Caco-2 (cell line): ENCODE measurements at regions of chr3 and their contacts with region 1.

Region 1: DNA sequence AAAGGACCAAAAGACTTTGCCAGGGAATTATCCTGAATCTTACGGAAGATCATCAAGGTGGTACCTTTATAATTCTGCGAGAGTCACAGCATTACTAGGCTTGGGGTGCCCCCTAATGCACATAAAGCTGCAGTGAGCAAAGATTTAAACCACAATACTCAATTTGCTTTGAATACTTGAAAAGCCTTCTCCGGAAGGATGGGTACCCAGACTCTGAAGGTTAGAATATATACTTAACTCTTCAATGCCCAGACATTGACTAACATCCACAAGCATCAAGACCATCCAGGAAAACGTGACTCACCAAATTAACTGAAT is 117.8 kb upstream of the KCNH8 start:
- DNase-seq: peak in 1 of 2 experiments; percentile 29
- H3K4me3 ChIP-seq: no peak overlapping the region
- H3K4me3 Mint-ChIP-seq: no peak overlapping the region
- H3K27ac Mint-ChIP-seq: no peak overlapping the region
- H3K4me1 ChIP-seq: no peaks in the 10 kb centered on the region
- H3K4me1 Mint-ChIP-seq: no peaks in the 10 kb centered on the region
- H3K27me3 ChIP-seq: no peaks in the 10 kb centered on the region
- H3K27me3 Mint-ChIP-seq: peaks cover 10% of the 10 kb centered on the region
- CTCF ChIP-seq: peak in 1 of 2 experiments; percentile 19

Region 2: GRCh38 chr3:18559331-18559842 is 471.1 kb before region 1 on chr3:
- CTCF ChIA-PET with region 1: no interaction called
- POLR2A ChIA-PET with region 1: no interaction called
- intact Hi-C with region 1: loop called (anchors 2 kb)
- DNase-seq: peak; percentile 45 to 48
- H3K4me3 ChIP-seq: no peak overlapping the region
- H3K4me3 Mint-ChIP-seq: no peak overlapping the region
- H3K27ac Mint-ChIP-seq: no peak overlapping the region
- H3K4me1 ChIP-seq: no peaks in the 10 kb centered on the region
- H3K4me1 Mint-ChIP-seq: peaks cover 14% of the 10 kb centered on the region
- H3K27me3 ChIP-seq: no peaks in the 10 kb centered on the region
- H3K27me3 Mint-ChIP-seq: no peaks in the 10 kb centered on the region
- CTCF ChIP-seq: peak; percentile 68 to 72

Region 3: DNA sequence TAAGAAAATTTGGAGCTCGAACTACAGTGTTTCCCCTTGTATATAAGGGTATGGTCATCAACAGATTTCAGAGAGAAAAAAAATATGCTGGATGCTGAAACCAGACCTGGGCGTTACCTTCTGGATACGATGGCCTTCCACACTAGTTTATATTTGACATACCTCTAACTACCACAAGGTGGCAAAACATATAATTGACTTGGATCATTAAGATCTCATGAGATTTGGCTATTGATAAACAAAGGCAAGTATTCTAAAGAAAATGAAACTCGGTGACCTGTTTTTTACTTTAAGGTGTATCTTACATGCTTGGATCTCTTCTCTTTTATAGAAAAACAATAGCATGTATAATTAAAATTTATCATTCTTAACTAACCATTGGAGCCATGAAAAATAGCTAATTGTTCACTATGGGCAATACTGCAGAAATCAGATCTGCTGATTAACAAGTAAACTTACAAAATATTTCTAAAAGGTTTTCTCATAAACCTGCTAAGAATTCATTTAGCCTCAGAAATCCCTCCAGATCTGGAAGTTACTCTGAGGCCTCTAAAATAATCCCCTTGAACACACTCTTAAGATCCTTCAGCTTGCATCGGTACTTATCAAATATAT is 182.8 kb before region 1 on chr3:
- CTCF ChIA-PET with region 1: no interaction called
- POLR2A ChIA-PET with region 1: no interaction called
- intact Hi-C with region 1: loop called (anchors 1 kb)
- DNase-seq: peak in 1 of 2 experiments; percentile 8
- H3K4me3 ChIP-seq: no peak overlapping the region
- H3K4me3 Mint-ChIP-seq: no peak overlapping the region
- H3K27ac Mint-ChIP-seq: no peak overlapping the region
- H3K4me1 ChIP-seq: 0 out of 2 replicates have a peak, but pooled peaks cover 9% of the 10 kb centered on the region
- H3K4me1 Mint-ChIP-seq: no peaks in the 10 kb centered on the region
- H3K27me3 ChIP-seq: no peaks in the 10 kb centered on the region
- H3K27me3 Mint-ChIP-seq: no peaks in the 10 kb centered on the region
- CTCF ChIP-seq: peak in 1 of 2 experiments; percentile 25

Region 4: DNA sequence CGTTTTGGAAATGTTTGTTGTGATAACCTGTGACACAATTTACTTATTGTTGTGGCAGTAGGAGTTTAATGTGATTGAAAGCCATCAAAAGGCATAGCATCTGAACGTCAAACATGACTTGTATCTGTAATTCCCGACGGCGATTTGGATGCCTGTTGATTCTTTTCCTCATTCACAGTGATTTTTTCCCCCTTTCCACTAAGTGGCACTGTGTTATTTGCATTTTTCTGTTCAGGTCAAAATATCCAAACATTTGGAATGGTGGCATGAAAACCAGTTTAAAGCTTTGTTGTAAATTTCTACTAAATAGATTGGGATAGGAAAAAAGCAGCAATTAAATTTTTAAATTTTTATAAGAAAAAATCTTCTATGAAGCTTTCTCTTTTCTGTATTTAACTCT is 142.1 kb before region 1 on chr3:
- CTCF ChIA-PET with region 1: no interaction called
- POLR2A ChIA-PET with region 1: no interaction called
- intact Hi-C with region 1: loop called (anchors 2 kb)
- DNase-seq: no peak
- H3K4me3 ChIP-seq: no peak overlapping the region
- H3K4me3 Mint-ChIP-seq: no peak overlapping the region
- H3K27ac Mint-ChIP-seq: no peak overlapping the region
- H3K4me1 ChIP-seq: no peaks in the 10 kb centered on the region
- H3K4me1 Mint-ChIP-seq: no peaks in the 10 kb centered on the region
- H3K27me3 ChIP-seq: no peaks in the 10 kb centered on the region
- H3K27me3 Mint-ChIP-seq: peaks cover 11% of the 10 kb centered on the region
- CTCF ChIP-seq: peak in 1 of 2 experiments; percentile 28

Region 5: GRCh38 chr3:19002606-19003005 is 27.9 kb before region 1 on chr3:
- CTCF ChIA-PET with region 1: no interaction called
- POLR2A ChIA-PET with region 1: no interaction called
- intact Hi-C with region 1: no loop called
- DNase-seq: no peak
- H3K4me3 ChIP-seq: no peak overlapping the region
- H3K4me3 Mint-ChIP-seq: no peak overlapping the region
- H3K27ac Mint-ChIP-seq: no peak overlapping the region
- H3K4me1 ChIP-seq: no peaks in the 10 kb centered on the region
- H3K4me1 Mint-ChIP-seq: no peaks in the 10 kb centered on the region
- H3K27me3 ChIP-seq: no peaks in the 10 kb centered on the region
- H3K27me3 Mint-ChIP-seq: no peaks in the 10 kb centered on the region
- CTCF ChIP-seq: no peak